IMR-90 (cell line): ENCODE measurements at regions of chr1 and their contacts with region 1.

Region 1: DNA sequence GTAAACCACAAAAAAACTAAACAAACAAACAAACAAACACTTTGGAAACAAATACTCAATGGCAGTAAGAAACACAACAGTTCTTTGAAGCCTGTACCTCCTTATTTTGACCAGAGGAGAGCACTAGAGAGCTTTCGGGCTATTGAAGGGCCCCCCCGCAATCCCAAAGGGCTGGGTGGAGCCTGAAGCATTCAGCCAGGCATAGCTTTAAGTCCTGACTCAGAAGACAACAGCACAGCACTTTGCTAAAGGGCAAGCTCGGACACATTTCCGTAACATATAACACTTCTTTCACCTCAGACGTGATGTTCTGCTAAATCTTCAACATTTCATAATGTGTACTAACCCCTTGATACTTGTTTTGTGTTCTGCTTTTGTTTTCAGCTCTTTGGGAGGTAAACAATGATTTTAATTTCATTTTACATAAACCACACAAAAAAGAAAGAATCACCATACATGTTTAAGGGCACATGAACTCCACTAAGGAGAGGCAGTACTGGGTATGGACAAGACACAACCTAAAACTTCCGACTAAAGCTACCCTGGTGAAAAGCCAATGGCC is 9.7 kb upstream of the SHCBP1L start:
- DNase-seq: peak; percentile 90
- ATAC-seq: peak; percentile 100
- H3K4me3 ChIP-seq: peak overlapping the region; percentile 20; the same call in 1 of the 2 replicates
- H3K27ac ChIP-seq: peak overlapping the region; percentile 77; the same call in 1 of the 2 replicates
- H3K4me1 ChIP-seq: no peaks in the 10 kb centered on the region
- H3K27me3 ChIP-seq: no peaks in the 10 kb centered on the region
- CTCF ChIP-seq: peak; percentile 97
- POLR2A ChIP-seq: peak; percentile 73
- RAD21 ChIP-seq: peak; percentile 99

Region 2: DNA sequence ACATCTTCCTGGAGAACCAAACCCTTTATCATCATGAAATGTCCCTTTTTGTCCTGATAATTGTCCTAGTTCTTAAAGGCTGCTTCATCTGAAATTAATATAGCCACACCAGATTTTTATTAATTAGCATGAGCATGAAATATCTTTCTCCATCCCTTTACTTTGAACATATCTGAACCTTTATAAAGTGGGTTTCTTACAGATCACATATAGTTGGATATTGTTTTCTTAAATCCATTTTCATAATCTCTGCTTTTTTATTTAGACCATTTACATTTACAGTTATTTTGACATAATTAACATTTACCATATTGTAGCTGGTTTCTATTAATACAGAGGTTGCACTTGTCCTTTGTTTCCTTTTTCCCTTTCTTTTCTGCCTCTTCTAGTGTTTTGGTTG is 26.9 kb before region 1 on chr1:
- CTCF ChIA-PET with region 1: no interaction called
- POLR2A ChIA-PET with region 1: no interaction called
- dilution Hi-C with region 1: no loop called
- in situ Hi-C with region 1: no loop called
- intact Hi-C with region 1: no loop called
- DNase-seq: no peak
- ATAC-seq: no peak
- H3K4me3 ChIP-seq: no peak overlapping the region
- H3K27ac ChIP-seq: no peak overlapping the region
- H3K4me1 ChIP-seq: no peaks in the 10 kb centered on the region
- H3K27me3 ChIP-seq: peaks cover 4% of the 10 kb centered on the region
- CTCF ChIP-seq: no peak
- POLR2A ChIP-seq: no peak
- RAD21 ChIP-seq: no peak

Region 3: DNA sequence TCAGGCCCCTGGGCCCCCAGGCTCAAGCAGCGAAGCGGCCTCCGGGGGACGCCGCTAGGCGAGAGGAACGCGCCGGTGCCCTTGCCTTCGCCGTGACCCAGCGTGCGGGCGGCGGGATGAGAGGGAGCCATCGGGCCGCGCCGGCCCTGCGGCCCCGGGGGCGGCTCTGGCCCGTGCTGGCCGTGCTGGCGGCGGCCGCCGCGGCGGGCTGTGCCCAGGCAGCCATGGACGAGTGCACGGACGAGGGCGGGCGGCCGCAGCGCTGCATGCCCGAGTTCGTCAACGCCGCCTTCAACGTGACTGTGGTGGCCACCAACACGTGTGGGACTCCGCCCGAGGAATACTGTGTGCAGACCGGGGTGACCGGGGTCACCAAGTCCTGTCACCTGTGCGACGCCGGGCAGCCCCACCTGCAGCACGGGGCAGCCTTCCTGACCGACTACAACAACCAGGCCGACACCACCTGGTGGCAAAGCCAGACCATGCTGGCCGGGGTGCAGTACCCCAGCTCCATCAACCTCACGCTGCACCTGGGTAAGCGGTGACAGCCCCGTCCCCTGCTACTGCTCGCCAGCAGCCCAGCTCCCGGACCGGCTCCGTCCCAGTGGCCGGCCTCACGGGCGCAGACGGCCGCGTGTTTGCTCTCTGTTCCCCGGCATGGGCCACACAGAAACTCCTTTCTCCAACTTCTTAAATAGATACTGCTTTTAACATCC is 61.1 kb after region 1 on chr1:
- CTCF ChIA-PET with region 1: interaction called, 3 read pairs
- POLR2A ChIA-PET with region 1: no interaction called
- dilution Hi-C with region 1: no loop called
- in situ Hi-C with region 1: loop called (anchors 5 kb)
- intact Hi-C with region 1: loop called (anchors 1 kb)
- DNase-seq: peak; percentile 47
- ATAC-seq: peak; percentile 31
- H3K4me3 ChIP-seq: peak overlapping the region; percentile 84
- H3K27ac ChIP-seq: peak overlapping the region; percentile 56
- H3K4me1 ChIP-seq: peaks cover 4% of the 10 kb centered on the region
- H3K27me3 ChIP-seq: no peaks in the 10 kb centered on the region
- CTCF ChIP-seq: peak; percentile 40
- POLR2A ChIP-seq: no peak; the same call in 1 of the 2 replicates
- RAD21 ChIP-seq: peak; percentile 40

Region 4: GRCh38 chr1:183034682-183035081 is 72.0 kb after region 1 on chr1:
- CTCF ChIA-PET with region 1: no interaction called
- POLR2A ChIA-PET with region 1: no interaction called
- dilution Hi-C with region 1: no loop called
- in situ Hi-C with region 1: no loop called
- intact Hi-C with region 1: no loop called
- DNase-seq: no peak
- ATAC-seq: no peak
- H3K4me3 ChIP-seq: no peak overlapping the region
- H3K27ac ChIP-seq: no peak overlapping the region
- H3K4me1 ChIP-seq: peaks cover 14% of the 10 kb centered on the region
- H3K27me3 ChIP-seq: no peaks in the 10 kb centered on the region
- CTCF ChIP-seq: no peak
- POLR2A ChIP-seq: no peak
- RAD21 ChIP-seq: no peak

Region 5: GRCh38 chr1:183124259-183124658 is 161.6 kb after region 1 on chr1:
- CTCF ChIA-PET with region 1: interaction called, 4 read pairs
- POLR2A ChIA-PET with region 1: no interaction called
- dilution Hi-C with region 1: no loop called
- in situ Hi-C with region 1: loop called (anchors 25 kb)
- intact Hi-C with region 1: loop called (anchors 2 kb)
- DNase-seq: no peak
- ATAC-seq: no peak
- H3K4me3 ChIP-seq: no peak overlapping the region
- H3K27ac ChIP-seq: no peak overlapping the region
- H3K4me1 ChIP-seq: peaks cover 10% of the 10 kb centered on the region
- H3K27me3 ChIP-seq: no peaks in the 10 kb centered on the region
- CTCF ChIP-seq: no peak
- POLR2A ChIP-seq: no peak
- RAD21 ChIP-seq: no peak

Region 6: DNA sequence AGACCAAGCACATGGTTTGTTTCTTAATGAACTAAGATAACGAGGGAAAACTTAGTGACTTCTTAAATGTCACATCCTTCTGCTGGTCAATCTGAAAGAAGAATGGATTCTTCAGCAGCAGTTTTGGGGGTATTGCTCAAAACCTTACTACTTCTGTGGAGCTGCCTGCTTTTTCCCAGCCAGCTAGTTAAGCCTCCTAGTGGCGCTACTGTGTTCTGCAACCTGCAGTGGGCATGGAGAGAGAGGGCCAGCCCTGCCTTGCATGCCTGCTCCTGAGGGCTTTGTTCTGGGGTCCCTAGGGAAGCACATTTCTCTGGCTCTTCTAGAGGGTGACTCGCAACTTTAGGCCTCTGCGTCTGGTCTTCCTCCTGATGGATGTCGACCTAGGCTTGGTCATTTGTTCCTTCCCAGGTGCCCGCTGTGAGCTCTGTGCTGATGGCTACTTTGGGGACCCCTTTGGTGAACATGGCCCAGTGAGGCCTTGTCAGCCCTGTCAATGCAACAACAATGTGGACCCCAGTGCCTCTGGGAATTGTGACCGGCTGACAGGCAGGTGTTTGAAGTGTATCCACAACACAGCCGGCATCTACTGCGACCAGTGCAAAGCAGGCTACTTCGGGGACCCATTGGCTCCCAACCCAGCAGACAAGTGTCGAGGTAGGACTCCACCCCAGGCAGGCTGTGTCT is 265.5 kb after region 1 on chr1:
- CTCF ChIA-PET with region 1: interaction called, 6 read pairs
- POLR2A ChIA-PET with region 1: no interaction called
- dilution Hi-C with region 1: no loop called
- in situ Hi-C with region 1: loop called (anchors 25 kb)
- intact Hi-C with region 1: no loop called
- DNase-seq: peak; percentile 41
- ATAC-seq: peak; percentile 83
- H3K4me3 ChIP-seq: no peak overlapping the region
- H3K27ac ChIP-seq: no peak overlapping the region
- H3K4me1 ChIP-seq: peaks cover 2% of the 10 kb centered on the region; the same call in 1 of the 2 replicates
- H3K27me3 ChIP-seq: no peaks in the 10 kb centered on the region
- CTCF ChIP-seq: peak; percentile 62
- POLR2A ChIP-seq: no peak
- RAD21 ChIP-seq: peak; percentile 69

Region 7: DNA sequence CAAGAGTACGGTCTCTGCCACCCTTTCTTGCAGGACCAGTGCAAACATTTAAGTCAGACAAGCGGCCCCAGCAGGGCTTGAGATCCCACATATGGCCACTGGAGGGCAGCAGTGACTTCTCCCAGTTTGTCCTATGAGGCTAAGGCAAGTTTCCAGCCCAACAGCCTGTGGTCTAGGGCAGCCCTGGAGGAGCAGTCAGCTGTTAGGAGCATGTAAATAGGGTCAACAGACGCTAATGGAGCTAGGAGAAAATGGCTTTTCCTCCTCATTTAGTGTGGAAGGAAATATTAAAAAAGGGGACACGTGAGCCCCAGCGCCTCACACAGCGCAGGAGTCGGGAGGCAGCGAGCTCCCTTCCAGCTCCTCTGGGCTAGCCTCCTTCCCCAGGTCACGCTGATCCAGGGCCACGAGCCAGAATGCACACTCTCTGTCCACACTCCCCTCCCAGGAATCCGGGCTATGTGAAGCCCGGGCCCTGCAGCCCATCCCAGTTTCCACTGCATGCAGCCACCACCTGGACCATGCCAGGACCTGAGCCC is 319.0 kb after region 1 on chr1:
- CTCF ChIA-PET with region 1: interaction called, 10 read pairs
- POLR2A ChIA-PET with region 1: no interaction called
- dilution Hi-C with region 1: no loop called
- in situ Hi-C with region 1: no loop called
- intact Hi-C with region 1: loop called (anchors 1 kb)
- DNase-seq: peak; percentile 93
- ATAC-seq: peak; percentile 85
- H3K4me3 ChIP-seq: no peak overlapping the region
- H3K27ac ChIP-seq: no peak overlapping the region
- H3K4me1 ChIP-seq: peaks cover 26% of the 10 kb centered on the region
- H3K27me3 ChIP-seq: no peaks in the 10 kb centered on the region
- CTCF ChIP-seq: peak; percentile 94
- POLR2A ChIP-seq: no peak
- RAD21 ChIP-seq: peak; percentile 89

Region 8: GRCh38 chr1:183543619-183544204 is 581.1 kb after region 1 on chr1:
- CTCF ChIA-PET with region 1: no interaction called
- POLR2A ChIA-PET with region 1: no interaction called
- dilution Hi-C with region 1: no loop called
- in situ Hi-C with region 1: no loop called
- intact Hi-C with region 1: loop called (anchors 2 kb)
- DNase-seq: peak; percentile 74
- ATAC-seq: peak; percentile 99
- H3K4me3 ChIP-seq: no peak overlapping the region
- H3K27ac ChIP-seq: no peak overlapping the region
- H3K4me1 ChIP-seq: no peaks in the 10 kb centered on the region; the same call in 1 of the 2 replicates
- H3K27me3 ChIP-seq: no peaks in the 10 kb centered on the region
- CTCF ChIP-seq: peak; percentile 79
- POLR2A ChIP-seq: no peak
- RAD21 ChIP-seq: peak; percentile 82